Activated CD4-positive, alpha-beta T cell treated with anti-CD3 and anti-CD28 coated beads, Interleukin-2, amount 10 ng/mL, durations not matched to agents 24 days and 14 days (primary cell): ENCODE measurements at regions of chr1 and their contacts with region 1.

Region 1: GRCh38 chr1:225474986-225475820 is 47.4 kb upstream of the LBR start:
- DNase-seq: peak; percentile 93
- H3K4me3 Mint-ChIP-seq: no peak overlapping the region
- H3K27ac Mint-ChIP-seq: no peak overlapping the region
- H3K4me1 Mint-ChIP-seq: peaks cover 38% of the 10 kb centered on the region
- H3K27me3 Mint-ChIP-seq: no peaks in the 10 kb centered on the region

Region 2: GRCh38 chr1:225554216-225554812 is 79.1 kb after region 1 on chr1:
- intact Hi-C with region 1: loop called (anchors 1 kb)
- DNase-seq: no peak
- H3K4me3 Mint-ChIP-seq: no peak overlapping the region
- H3K27ac Mint-ChIP-seq: no peak overlapping the region
- H3K4me1 Mint-ChIP-seq: no peaks in the 10 kb centered on the region
- H3K27me3 Mint-ChIP-seq: peaks cover 12% of the 10 kb centered on the region

Region 3: GRCh38 chr1:225652729-225653462 is 177.7 kb after region 1 on chr1 and contains the start of gene ENAH:
- intact Hi-C with region 1: loop called (anchors 2 kb)
- DNase-seq: peak; percentile 79
- H3K4me3 Mint-ChIP-seq: peak within 1 kb of the TSS; percentile 83
- H3K27ac Mint-ChIP-seq: no peak within 1 kb of the TSS
- H3K4me1 Mint-ChIP-seq: peaks cover 10% of the 10 kb centered on the region
- H3K27me3 Mint-ChIP-seq: peaks cover 65% of the 10 kb centered on the region
- total RNA-seq, gene ENAH: 0.33 TPM in 1 of 2 replicates, not detected in the other